Activated CD4-positive, alpha-beta T cell treated with anti-CD3 and anti-CD28 coated beads for 36 hours (primary cell): ENCODE measurements at regions of chr6 and their contacts with region 1.

Region 1: DNA sequence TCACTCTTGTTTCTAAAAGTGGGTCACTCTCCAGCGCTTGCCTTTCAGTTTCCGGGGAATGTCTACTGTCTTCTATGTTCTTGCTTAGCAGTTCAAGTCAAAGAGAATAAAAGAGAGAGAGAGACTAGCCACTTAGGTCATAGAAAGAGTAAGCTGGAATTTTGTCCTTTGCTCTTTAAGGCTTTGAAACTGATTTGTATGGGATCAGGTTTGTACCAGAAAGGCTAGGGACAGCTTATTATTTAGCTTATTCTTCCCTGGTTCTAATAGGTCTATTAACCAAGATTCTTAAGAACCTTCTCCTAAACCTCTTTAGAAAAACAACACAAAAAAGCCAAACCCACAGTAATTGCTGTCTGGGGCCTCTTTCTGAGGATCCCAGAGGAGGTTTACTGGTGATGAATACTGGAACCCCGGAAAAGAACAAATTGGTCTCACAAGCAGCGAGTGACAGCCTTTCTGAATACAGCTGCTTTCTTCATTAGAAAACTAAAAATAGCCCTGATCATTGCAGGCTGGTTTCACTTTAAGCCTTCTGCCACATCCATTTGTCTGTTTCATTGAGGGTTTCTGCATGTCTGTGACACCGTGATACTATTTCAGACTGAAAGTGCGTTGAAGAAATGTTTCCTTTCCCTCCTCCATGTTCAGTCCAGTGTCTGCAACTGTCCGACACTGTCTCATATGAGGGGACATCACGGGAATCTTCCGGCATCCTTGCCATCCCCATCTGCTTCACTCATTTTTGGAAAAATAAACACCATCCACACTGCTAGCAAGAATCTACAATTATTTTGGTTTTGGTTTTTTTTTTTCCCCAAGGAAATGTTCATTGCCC is 75.1 kb upstream of the ATXN1 start:
- DNase-seq: no peak
- ATAC-seq: peak; percentile 64
- H3K4me3 Mint-ChIP-seq: peak overlapping the region; percentile 5
- H3K27ac Mint-ChIP-seq: peak overlapping the region; percentile 63
- H3K4me1 Mint-ChIP-seq: peaks cover 36% of the 10 kb centered on the region
- H3K27me3 Mint-ChIP-seq: peaks cover 4% of the 10 kb centered on the region

Region 2: GRCh38 chr6:16770701-16771569 is 65.4 kb before region 1 on chr6:
- CTCF ChIA-PET with region 1: no interaction called
- POLR2A ChIA-PET with region 1: no interaction called
- intact Hi-C with region 1: loop called in 1 of 2 experiments (anchors 5 kb)
- DNase-seq: peak; percentile 89
- ATAC-seq: peak; percentile 70
- H3K4me3 Mint-ChIP-seq: no peak overlapping the region
- H3K27ac Mint-ChIP-seq: no peak overlapping the region
- H3K4me1 Mint-ChIP-seq: peaks cover 49% of the 10 kb centered on the region
- H3K27me3 Mint-ChIP-seq: no peaks in the 10 kb centered on the region

Region 3: GRCh38 chr6:16949716-16950115 is 113.4 kb after region 1 on chr6:
- CTCF ChIA-PET with region 1: no interaction called
- POLR2A ChIA-PET with region 1: no interaction called
- intact Hi-C with region 1: loop called (anchors 1 to 5 kb)
- DNase-seq: no peak
- ATAC-seq: no peak
- H3K4me3 Mint-ChIP-seq: no peak overlapping the region
- H3K27ac Mint-ChIP-seq: no peak overlapping the region
- H3K4me1 Mint-ChIP-seq: peaks cover 21% of the 10 kb centered on the region
- H3K27me3 Mint-ChIP-seq: peaks cover 45% of the 10 kb centered on the region

Region 4: DNA sequence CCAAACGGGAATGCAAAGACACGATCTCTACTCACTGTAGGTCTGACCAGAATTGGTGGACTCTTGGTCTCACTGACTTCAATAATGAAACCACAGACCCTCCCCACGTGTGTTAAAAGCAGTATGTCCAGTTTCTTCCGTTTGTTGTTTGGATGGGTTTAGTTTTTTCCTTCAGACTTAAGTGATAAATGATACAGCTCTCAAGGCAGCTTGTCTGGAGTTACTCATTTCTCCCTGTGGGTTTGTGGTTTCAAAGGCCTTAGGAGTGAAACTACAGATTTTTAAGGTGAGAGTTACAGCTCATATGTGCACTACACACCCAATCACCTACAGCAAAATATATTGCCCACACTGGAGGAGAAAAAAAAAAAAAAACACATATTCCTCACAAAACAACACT is 178.8 kb after region 1 on chr6:
- CTCF ChIA-PET with region 1: no interaction called
- POLR2A ChIA-PET with region 1: no interaction called
- intact Hi-C with region 1: loop called in 1 of 2 experiments (anchors 2 kb)
- DNase-seq: peak; percentile 47
- ATAC-seq: peak; percentile 92
- H3K4me3 Mint-ChIP-seq: peak overlapping the region; percentile 36
- H3K27ac Mint-ChIP-seq: peak overlapping the region; percentile 38
- H3K4me1 Mint-ChIP-seq: peaks cover 17% of the 10 kb centered on the region
- H3K27me3 Mint-ChIP-seq: peaks cover 27% of the 10 kb centered on the region